ENCODE measurements at regions of chr1 and their contacts with region 1.

Region 1: DNA sequence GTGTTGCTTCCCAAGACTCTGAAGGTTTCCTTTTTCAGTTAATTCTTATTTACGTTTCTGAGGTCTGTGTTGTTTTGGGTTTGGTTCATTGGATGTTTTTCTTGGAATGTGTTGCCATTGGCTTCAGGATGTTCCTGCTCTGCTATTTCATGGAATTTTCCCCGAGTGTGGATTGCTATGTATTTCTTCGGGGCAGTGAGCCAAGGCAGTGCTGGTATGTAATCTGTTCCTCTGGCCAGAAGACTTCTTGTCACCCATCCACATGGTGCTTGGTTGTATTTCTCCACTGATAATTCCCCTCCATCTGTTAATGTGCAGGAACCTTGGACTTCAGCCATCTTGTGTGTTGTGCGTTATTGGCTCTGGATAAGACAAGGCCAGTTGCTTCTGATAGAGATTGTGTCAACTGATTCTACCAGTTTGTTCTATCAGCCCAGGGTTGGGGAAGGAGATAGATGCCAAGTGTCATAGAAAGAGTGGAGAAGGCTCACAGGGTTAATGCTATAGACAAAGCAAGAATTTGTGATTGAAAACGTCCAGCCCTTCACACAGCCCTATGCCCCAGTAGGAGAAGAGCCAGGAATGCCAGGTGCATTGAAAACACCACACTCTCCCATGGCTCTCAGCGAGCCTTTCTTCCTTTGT is 505.2 kb downstream of the PLPP3 start:
- DNase-seq: peak in 1 of 2 donors; percentile 91
- H3K4me3 ChIP-seq: peak overlapping the region in 1 of 2 donors; percentile 5
- H3K27ac ChIP-seq: peak overlapping the region; percentile 81 to 90
- H3K4me1 ChIP-seq: peaks cover 4 to 21% of the 10 kb centered on the region in 2 donors
- H3K27me3 ChIP-seq: no peaks in the 10 kb centered on the region
- CTCF ChIP-seq: no peak

Region 2: DNA sequence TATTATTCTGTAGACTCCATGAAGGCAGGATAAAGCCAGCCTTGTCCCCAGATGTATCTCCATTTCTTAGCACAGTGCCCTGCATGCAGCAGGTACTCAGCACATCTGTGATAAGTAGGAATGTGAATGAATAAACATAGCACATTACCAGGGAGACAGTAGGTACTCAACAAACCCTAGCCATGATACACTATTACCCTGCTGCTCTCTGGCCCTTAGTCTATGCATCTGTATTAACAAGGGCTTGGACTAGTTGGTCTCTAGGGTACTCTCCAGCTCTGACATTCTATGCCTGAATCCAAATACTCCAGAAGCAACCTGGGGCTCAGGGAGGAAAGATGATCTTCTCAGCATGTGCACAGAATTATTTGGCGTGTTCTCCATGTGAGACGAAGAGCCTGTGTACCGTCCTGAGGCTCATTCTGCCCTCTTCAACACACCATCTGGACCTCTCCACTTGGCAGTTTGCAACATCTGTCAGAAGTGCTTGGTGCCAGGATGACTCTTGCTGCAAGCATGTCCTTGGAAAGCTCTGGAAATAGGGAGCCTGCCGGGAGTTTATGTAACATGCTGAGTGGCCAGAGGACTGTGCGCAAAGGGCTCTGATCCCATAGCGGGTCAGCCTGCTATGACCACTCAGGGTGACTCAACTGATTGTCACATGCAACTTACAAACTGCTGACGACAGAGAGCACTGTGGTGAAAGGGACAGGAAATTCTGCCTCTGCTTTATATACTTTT is 630.8 kb before region 1 on chr1:
- intact Hi-C with region 1: loop called (anchors 5 kb)
- DNase-seq: peak; percentile 91 to 97
- H3K4me3 ChIP-seq: no peak overlapping the region
- H3K27ac ChIP-seq: peak overlapping the region; percentile 62 to 79
- H3K4me1 ChIP-seq: peaks cover 5 to 16% of the 10 kb centered on the region in 2 donors
- H3K27me3 ChIP-seq: no peaks in the 10 kb centered on the region
- CTCF ChIP-seq: no peak

Region 3: GRCh38 chr1:55584526-55585401 is 489.4 kb before region 1 on chr1:
- intact Hi-C with region 1: loop called (anchors 5 kb)
- DNase-seq: no peak
- H3K4me3 ChIP-seq: no peak overlapping the region
- H3K27ac ChIP-seq: peak overlapping the region; percentile 27 to 28
- H3K4me1 ChIP-seq: peaks cover 11 to 40% of the 10 kb centered on the region in 2 donors
- H3K27me3 ChIP-seq: no peaks in the 10 kb centered on the region
- CTCF ChIP-seq: no peak

Region 4: DNA sequence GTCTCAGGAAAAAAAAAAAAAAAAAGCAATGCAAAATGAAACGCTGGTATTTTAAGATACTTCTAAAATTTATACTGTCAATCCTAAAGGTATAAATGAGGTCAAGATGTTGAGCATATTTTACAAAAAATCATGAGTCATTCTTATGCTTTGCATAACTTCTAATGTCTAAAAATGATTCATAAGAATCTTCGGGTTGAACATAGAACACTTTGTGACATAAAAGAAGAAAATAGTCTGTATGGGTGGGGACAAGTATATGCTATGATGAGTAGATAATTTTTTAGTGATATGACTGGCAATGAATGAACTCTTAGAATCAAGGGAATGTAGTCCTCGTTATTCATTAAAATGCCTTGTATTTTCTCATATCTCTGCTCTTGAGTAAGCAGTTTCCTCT is 442.1 kb before region 1 on chr1:
- intact Hi-C with region 1: loop called (anchors 10 kb)
- DNase-seq: no peak
- H3K4me3 ChIP-seq: no peak overlapping the region
- H3K27ac ChIP-seq: peak overlapping the region; percentile 63 to 66
- H3K4me1 ChIP-seq: peaks cover 20 to 42% of the 10 kb centered on the region in 2 donors
- H3K27me3 ChIP-seq: no peaks in the 10 kb centered on the region
- CTCF ChIP-seq: no peak

Region 5: DNA sequence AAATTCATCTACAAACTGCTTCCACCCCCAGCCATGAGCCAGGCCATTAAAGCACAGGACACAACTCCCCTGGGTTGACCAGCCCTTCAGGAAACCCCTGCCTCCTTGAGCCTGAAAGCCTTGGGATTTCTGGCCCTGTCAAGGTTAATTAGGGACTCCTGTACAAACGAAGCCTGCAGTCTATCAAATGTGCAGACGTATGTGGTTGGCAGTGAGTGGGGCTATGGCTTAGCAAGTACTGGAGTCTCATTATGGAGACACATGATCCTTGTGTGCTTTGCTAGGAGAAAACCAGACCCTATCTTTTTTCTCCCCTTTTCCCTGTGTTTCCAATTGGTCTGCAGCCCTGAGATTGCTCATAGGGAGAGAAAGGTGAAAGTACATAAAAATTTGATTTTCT is 270.7 kb before region 1 on chr1:
- intact Hi-C with region 1: no loop called
- DNase-seq: no peak
- H3K4me3 ChIP-seq: no peak overlapping the region
- H3K27ac ChIP-seq: no peak overlapping the region
- H3K4me1 ChIP-seq: no peaks in the 10 kb centered on the region
- H3K27me3 ChIP-seq: no peaks in the 10 kb centered on the region
- CTCF ChIP-seq: no peak

Region 6: GRCh38 chr1:56169856-56170255 is 95.7 kb after region 1 on chr1:
- intact Hi-C with region 1: no loop called
- DNase-seq: no peak
- H3K4me3 ChIP-seq: no peak overlapping the region
- H3K27ac ChIP-seq: peak overlapping the region in 1 of 2 donors; percentile 45
- H3K4me1 ChIP-seq: peaks cover 3 to 12% of the 10 kb centered on the region in 2 donors
- H3K27me3 ChIP-seq: no peaks in the 10 kb centered on the region
- CTCF ChIP-seq: no peak

Region 7: GRCh38 chr1:56222914-56223540 is 148.9 kb after region 1 on chr1:
- intact Hi-C with region 1: no loop called
- DNase-seq: no peak
- H3K4me3 ChIP-seq: no peak overlapping the region
- H3K27ac ChIP-seq: no peak overlapping the region
- H3K4me1 ChIP-seq: no peaks in the 10 kb centered on the region
- H3K27me3 ChIP-seq: no peaks in the 10 kb centered on the region
- CTCF ChIP-seq: no peak

Region 8: GRCh38 chr1:56255516-56256152 is 181.5 kb after region 1 on chr1:
- intact Hi-C with region 1: loop called (anchors 5 kb)
- DNase-seq: peak; percentile 55 to 91
- H3K4me3 ChIP-seq: no peak overlapping the region
- H3K27ac ChIP-seq: peak overlapping the region; percentile 34 to 68
- H3K4me1 ChIP-seq: peaks cover 9 to 14% of the 10 kb centered on the region in 2 donors
- H3K27me3 ChIP-seq: no peaks in the 10 kb centered on the region
- CTCF ChIP-seq: no peak

Region 9: GRCh38 chr1:56409094-56409691 is 335.1 kb after region 1 on chr1:
- intact Hi-C with region 1: no loop called
- DNase-seq: no peak
- H3K4me3 ChIP-seq: no peak overlapping the region
- H3K27ac ChIP-seq: no peak overlapping the region
- H3K4me1 ChIP-seq: peaks cover 3 to 12% of the 10 kb centered on the region in 2 donors
- H3K27me3 ChIP-seq: no peaks in the 10 kb centered on the region
- CTCF ChIP-seq: no peak